Sigmoid colon (tissue), 7 donors: ENCODE measurements at regions of chr20 and their contacts with region 1.

Region 1: DNA sequence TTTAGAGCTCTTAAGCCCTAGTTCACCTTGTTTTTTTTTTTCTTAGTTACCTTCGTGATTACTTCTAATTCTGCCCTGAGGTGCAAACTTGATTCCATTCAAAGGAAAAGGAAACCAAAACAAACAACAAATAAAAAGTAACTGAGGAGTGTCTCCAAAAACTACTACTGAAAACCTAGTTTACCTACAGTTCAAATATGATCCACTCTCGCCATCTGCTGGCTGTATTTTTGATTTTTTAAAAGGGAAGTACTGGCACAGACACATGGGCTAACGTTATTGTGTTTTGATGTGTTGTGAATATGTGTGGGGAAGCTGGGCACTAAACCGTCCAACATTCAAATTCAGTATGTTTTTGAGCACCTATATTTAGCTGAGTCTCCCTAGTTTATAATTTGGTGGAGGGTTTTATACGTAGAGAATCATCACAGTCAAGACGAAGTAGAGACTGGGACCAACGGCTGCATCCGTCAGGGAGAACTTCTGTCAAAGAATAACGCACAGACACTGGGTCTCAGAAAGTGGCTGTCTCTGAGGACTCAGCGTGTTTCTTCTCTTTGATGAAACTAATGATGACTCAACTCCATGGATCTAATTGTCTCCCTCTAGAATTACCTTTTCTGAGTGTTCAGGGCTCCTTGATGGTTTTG is 373.5 kb upstream of the BTBD3 start:
- DNase-seq: no peak
- H3K4me3 ChIP-seq: no peak overlapping the region
- H3K27ac ChIP-seq: no peak overlapping the region
- H3K4me1 ChIP-seq: no peaks in the 10 kb centered on the region
- H3K27me3 ChIP-seq: no peaks in the 10 kb centered on the region
- CTCF ChIP-seq: peak; percentile 45 to 69 (median 57)
- EP300 ChIP-seq: no peak
- POLR2A ChIP-seq: no peak

Region 2: DNA sequence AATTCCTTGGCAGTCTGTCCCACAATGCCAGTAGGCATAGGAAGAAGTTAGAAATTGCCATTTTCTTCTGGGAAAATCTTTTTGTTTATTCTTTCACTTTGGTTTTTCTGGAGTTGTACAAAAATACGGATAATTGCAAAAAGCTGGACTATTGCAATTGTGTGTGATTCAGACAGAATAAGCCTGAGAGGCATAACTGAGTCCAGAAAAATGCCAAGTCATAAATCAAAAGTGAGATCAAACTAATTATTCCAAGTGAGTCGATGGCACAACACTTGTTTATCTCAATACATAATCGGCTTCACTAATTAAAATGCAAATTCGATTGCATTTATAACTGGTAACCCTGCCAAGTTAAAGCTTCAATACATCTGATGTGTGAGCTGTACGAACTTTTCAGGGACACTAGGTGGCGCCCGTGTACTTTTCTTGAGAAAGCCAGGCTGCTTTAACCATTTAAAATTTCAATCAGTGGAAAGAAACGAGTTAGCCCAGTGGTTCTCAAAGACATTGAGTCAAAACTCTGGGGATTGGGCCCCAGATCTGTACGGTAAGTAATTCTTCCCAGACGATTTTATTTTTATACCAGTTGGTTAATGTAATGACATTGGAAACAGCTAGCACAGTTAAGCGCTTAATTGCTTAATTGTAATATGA is 1927.2 kb before region 1 on chr20:
- intact Hi-C with region 1: loop called (anchors 10 kb)
- DNase-seq: no peak
- H3K4me3 ChIP-seq: no peak overlapping the region
- H3K27ac ChIP-seq: no peak overlapping the region
- H3K4me1 ChIP-seq: no peaks in the 10 kb centered on the region
- H3K27me3 ChIP-seq: no peaks in the 10 kb centered on the region
- CTCF ChIP-seq: peak; percentile 37 to 76 (median 66)
- EP300 ChIP-seq: no peak
- POLR2A ChIP-seq: no peak

Region 3: DNA sequence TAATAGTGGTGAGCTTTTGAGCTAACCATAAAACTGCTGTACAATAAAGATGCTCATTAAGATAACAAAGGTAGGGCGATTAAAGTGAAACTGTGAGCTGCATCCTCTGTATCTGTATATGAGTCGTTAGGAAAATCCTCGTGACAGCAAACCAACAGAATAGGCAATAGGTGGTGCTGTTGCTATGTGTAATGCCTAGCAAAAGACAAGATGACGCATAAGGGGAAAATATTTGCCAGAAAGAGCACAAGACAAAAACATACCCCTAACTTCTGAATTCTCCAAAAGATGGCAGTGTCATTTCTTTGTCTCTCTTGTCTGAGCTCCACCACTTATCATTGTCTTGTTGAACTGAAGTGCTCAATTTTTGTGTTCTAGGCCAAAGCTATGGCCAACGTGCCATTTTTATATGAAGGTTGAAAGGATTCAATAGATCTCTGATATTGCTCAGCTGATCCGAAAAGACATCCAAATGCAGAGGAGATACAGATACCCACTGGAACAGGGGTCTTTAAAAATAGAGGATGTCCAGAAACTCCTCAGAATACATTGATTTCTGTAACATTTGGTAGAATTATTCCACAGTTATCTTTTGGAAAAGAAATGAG is 1565.7 kb before region 1 on chr20:
- intact Hi-C with region 1: loop called (anchors 5 kb)
- DNase-seq: no peak
- H3K4me3 ChIP-seq: no peak overlapping the region
- H3K27ac ChIP-seq: no peak overlapping the region
- H3K4me1 ChIP-seq: peaks cover 0 to 3% (median 0%) of the 10 kb centered on the region in 4 donors
- H3K27me3 ChIP-seq: no peaks in the 10 kb centered on the region
- CTCF ChIP-seq: peak; percentile 42 to 67 (median 56)
- EP300 ChIP-seq: no peak
- POLR2A ChIP-seq: no peak

Region 4: DNA sequence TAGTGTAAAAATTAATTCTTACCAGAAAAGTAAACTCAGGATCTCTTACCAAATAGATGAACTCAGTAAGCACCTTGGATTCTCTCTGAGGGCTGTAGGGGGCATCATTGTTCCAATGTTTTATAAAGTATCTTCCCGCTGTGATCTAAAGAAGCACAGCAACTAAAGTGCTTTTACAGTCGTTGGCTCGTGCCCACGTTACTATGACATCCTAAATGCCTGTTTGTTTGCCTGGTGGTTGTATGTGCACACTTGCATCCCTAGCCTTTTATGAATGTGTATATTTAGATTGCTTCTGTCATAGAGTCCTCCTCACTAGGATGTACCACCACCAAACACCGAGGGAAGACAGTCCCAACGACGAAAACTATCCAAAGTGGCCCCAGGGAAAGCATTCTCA is 1074.6 kb before region 1 on chr20:
- intact Hi-C with region 1: loop called (anchors 5 kb)
- DNase-seq: peak; percentile 88
- H3K4me3 ChIP-seq: no peak overlapping the region
- H3K27ac ChIP-seq: peak overlapping the region in 3 of 4 donors; percentile 27 to 52 (median 51)
- H3K4me1 ChIP-seq: peaks cover 0 to 49% (median 32%) of the 10 kb centered on the region in 4 donors
- H3K27me3 ChIP-seq: no peaks in the 10 kb centered on the region
- CTCF ChIP-seq: peak; percentile 54 to 70 (median 56)
- EP300 ChIP-seq: no peak
- POLR2A ChIP-seq: no peak

Region 5: GRCh38 chr20:10553326-10553984 is 990.7 kb before region 1 on chr20:
- intact Hi-C with region 1: loop called (anchors 2 kb)
- DNase-seq: peak; percentile 79
- H3K4me3 ChIP-seq: no peak overlapping the region
- H3K27ac ChIP-seq: no peak overlapping the region
- H3K4me1 ChIP-seq: peaks cover 0 to 29% (median 15%) of the 10 kb centered on the region in 4 donors
- H3K27me3 ChIP-seq: no peaks in the 10 kb centered on the region
- CTCF ChIP-seq: peak; percentile 55 to 71 (median 66)
- EP300 ChIP-seq: no peak
- POLR2A ChIP-seq: no peak

Region 6: GRCh38 chr20:11608736-11609135 is 64.6 kb after region 1 on chr20:
- intact Hi-C with region 1: no loop called
- DNase-seq: no peak
- H3K4me3 ChIP-seq: no peak overlapping the region
- H3K27ac ChIP-seq: no peak overlapping the region
- H3K4me1 ChIP-seq: no peaks in the 10 kb centered on the region
- H3K27me3 ChIP-seq: no peaks in the 10 kb centered on the region
- CTCF ChIP-seq: no peak
- EP300 ChIP-seq: no peak
- POLR2A ChIP-seq: no peak